Activated CD8-positive, alpha-beta memory T cell treated with anti-CD3 and anti-CD28 coated beads, Interleukin-2, amount 10 ng/mL, durations not matched to agents 7 days and 5 days (primary cell): ENCODE measurements at regions of chr4 and their contacts with region 1.

Region 1: GRCh38 chr4:74444891-74445642 is at the start of gene AREG:
- DNase-seq: peak; percentile 88
- ATAC-seq: peak; percentile 95
- H3K4me3 Mint-ChIP-seq: peak within 1 kb of the TSS; percentile 79
- H3K27ac Mint-ChIP-seq: peak within 1 kb of the TSS; percentile 24
- H3K4me1 Mint-ChIP-seq: peaks cover 12% of the 10 kb centered on the region
- H3K27me3 Mint-ChIP-seq: peaks cover 8% of the 10 kb centered on the region
- total RNA-seq, gene AREG: 0.19 to 0.53 TPM

Region 2: DNA sequence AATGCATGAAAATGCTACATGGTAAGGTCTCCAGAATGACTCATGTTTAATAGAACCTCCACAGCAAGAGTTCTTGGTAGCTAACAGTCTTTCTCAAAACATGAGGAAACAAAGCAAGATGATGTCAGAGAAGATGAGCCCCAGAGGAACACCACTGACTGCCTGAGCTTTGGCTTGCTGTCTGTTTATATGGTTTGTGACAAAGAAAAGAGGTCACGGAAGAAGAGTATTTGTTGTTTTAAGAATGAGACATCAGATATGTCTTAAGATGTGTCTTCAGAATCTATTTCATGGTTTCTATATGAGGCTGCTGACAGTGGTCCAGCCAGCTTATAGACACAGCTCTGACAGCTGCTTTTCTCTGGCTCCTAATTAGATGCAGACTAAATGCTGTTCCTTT is 19.0 kb before region 1 on chr4:
- CTCF ChIA-PET with region 1: interaction called, 10 read pairs
- DNase-seq: no peak
- ATAC-seq: peak; percentile 69
- H3K4me3 Mint-ChIP-seq: no peak overlapping the region
- H3K27ac Mint-ChIP-seq: peak overlapping the region; percentile 13
- H3K4me1 Mint-ChIP-seq: peaks cover 20% of the 10 kb centered on the region
- H3K27me3 Mint-ChIP-seq: no peaks in the 10 kb centered on the region